ENCODE measurements at regions of chr3 and their contacts with region 1.

Region 1: DNA sequence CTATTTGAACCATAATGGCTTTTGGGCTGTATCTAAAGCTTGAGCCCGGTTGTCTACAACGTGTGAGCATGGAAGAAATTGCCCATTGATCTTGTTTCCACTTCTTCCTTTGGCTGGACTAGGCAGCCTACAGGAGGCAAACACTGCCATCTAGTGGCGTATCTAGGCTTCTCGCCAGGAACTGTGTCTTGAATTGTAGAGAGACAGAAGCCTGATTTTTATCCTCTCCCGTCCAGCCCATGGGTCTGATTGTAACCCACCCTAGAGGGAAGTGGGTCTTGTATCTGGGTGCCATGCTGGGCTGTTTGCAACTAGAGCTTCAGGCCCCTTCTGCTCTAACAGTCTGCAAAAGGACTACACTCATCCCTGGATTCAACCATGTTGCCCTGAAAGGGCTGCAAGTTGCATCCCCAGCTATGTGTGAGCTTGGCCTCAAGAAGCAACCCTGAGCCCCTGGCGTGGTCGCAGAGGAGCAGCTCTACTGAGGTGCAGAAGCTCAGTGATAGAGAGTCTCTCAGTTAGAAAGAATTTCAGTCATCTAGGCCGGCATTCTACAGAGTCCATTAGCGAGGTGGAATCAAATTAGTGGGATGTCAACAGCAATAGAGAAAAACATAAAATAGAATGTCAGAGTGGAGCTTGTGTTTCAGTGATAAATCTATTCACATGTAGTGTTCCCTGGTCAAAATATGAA is 170.2 kb upstream of the UMPS start:
- DNase-seq: no peak
- H3K4me3 ChIP-seq: no peak overlapping the region
- H3K27me3 ChIP-seq: 0 out of 2 replicates have a peak, but pooled peaks cover 1% of the 10 kb centered on the region
- CTCF ChIP-seq: peak; percentile 89

Region 2: DNA sequence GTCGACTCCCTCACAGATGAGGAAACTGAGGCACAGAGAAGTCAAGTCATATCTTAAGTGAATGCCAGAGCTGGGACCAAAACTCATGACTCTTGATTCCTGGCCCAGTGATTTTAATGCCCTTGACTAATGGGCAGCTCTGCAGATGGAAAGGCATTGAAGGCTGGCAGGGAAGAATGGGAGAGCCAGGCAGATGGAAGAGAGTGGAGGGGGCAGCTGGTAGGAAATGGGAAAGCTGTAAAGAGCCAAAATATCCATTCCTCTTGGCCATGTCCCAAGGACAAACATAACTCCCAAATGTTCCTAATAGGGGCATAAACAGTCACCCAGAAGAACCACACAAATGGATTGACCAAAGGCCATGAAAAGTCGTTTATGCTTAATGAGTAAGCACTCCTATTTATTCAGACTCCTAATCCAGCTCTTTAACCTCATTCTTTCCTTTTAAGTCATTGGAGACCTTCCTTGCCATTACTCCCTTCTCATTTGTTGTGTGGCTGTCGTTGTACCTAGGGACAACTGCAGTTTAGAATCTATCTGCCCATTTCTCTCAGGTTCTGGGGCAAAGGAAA is 237.6 kb before region 1 on chr3:
- CTCF ChIA-PET with region 1: no interaction called
- POLR2A ChIA-PET with region 1: no interaction called
- DNase-seq: no peak
- H3K4me3 ChIP-seq: no peak overlapping the region
- H3K27me3 ChIP-seq: peaks cover 2% of the 10 kb centered on the region; the same call in 1 of the 2 replicates
- CTCF ChIP-seq: no peak

Region 3: DNA sequence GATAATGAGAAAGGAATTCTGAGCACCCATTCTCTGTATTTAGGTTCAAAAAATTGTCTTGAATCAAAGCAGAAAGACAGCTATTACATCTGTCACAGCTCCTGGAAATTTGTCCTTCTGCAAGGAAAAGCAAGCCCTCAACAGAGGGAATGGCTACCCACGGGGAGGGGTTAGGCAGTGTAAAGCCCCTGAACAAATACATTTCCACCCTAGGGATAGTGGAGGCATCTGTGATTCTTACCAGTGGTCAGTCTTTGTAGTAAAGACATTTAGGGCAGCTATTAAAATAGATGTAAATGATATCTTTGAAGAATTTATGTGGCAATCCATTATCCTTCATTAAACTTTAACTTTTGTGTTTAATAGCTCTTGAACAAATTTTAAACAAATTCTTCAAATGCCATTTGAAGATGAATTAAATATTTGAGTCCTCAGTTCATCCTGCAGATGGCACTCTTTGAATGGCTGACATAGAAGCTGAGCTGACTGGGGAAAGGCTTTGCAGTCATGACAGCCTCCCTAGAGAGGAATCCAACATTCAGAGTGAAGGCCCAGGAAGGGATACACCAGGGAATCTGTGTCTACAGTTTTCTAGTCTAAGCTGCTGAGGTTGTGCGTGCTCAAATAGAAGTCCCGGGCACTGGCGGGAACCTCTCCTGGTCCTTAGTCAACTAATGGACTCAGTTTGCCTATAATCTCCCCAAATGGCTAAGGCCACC is 208.4 kb before region 1 on chr3:
- CTCF ChIA-PET with region 1: interaction called, 30 read pairs
- POLR2A ChIA-PET with region 1: no interaction called
- DNase-seq: peak; percentile 62
- H3K4me3 ChIP-seq: no peak overlapping the region
- H3K27me3 ChIP-seq: no peaks in the 10 kb centered on the region; the same call in 1 of the 2 replicates
- CTCF ChIP-seq: peak; percentile 57

Region 4: GRCh38 chr3:124439603-124440002 is 120.4 kb before region 1 on chr3:
- CTCF ChIA-PET with region 1: no interaction called
- POLR2A ChIA-PET with region 1: no interaction called
- DNase-seq: no peak
- H3K4me3 ChIP-seq: no peak overlapping the region
- H3K27me3 ChIP-seq: no peaks in the 10 kb centered on the region
- CTCF ChIP-seq: no peak

Region 5: GRCh38 chr3:124576565-124577493 is 16.8 kb after region 1 on chr3:
- CTCF ChIA-PET with region 1: interaction called, 31 read pairs
- POLR2A ChIA-PET with region 1: no interaction called
- DNase-seq: no peak
- H3K4me3 ChIP-seq: no peak overlapping the region
- H3K27me3 ChIP-seq: no peaks in the 10 kb centered on the region
- CTCF ChIP-seq: no peak

Region 6: GRCh38 chr3:124688581-124689454 is 128.8 kb after region 1 on chr3:
- CTCF ChIA-PET with region 1: interaction called, 189 read pairs
- POLR2A ChIA-PET with region 1: interaction called, 8 read pairs
- DNase-seq: no peak
- H3K4me3 ChIP-seq: no peak overlapping the region
- H3K27me3 ChIP-seq: no peaks in the 10 kb centered on the region; the same call in 1 of the 2 replicates
- CTCF ChIP-seq: peak; percentile 87